ENCODE measurements at regions of chr1 and their contacts with region 1.

Region 1: DNA sequence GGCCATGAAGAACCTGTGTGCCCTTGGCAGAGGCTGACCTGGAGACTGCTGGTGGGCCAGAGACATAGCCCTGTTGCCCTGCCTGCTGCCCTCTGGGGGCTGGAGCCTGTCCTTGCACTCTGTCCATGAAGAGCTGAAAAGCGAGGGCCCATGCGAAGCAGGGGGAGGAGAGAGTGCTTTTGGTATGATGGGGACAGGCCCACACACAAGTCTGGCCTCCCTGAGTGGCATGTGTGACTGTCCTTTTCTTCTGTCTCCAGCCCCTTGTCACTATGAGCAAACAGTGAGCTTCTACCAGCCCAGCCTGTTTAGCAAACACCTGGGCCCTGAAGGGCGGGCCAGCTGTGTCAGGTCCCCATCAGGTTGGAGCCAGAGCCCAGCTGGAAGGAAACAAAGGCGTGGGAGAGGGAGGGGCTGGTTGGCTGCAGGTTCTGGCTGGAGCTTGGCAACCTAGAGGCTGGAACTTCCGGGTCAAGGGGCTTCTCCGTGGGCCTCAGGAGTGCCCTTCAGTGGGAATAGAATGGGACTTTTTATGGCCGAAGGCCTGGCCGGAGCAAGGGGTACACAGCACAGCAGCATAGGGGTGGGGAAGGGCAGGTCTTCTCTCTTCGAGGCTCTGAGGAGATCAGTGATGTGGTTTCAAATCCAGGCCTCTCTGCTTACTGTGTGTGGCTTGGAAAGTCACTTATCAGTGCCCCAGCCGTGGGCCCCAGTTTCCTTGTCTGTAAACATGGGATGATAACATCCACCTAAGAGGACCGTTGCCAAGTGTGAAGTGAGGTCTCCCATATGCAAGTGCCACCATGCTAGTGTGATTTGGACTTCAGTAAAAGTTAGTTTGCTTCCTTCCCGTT is 14.3 kb downstream of the QSOX1 start:
- DNase-seq: peak; percentile 81

Region 2: GRCh38 chr1:180154325-180155181 is 14.5 kb before region 1 on chr1 and contains the start of gene QSOX1:
- CTCF ChIA-PET with region 1: interaction called, 11 read pairs
- POLR2A ChIA-PET with region 1: interaction called, 20 read pairs
- DNase-seq: peak; percentile 99

Region 3: GRCh38 chr1:180327089-180327488 is 158.1 kb after region 1 on chr1:
- CTCF ChIA-PET with region 1: no interaction called
- POLR2A ChIA-PET with region 1: no interaction called
- DNase-seq: no peak

Measured in HEK293T (cell line).